CD14-positive monocyte (primary cell): ENCODE measurements at regions of chr10 and their contacts with region 1.

Region 1: GRCh38 chr10:4333459-4333894 is 492.5 kb upstream of the AKR1E2 start:
- DNase-seq: peak; percentile 72 to 89 (median 73)
- H3K4me3 ChIP-seq: no peak overlapping the region
- H3K4me3 Mint-ChIP-seq: no peak overlapping the region
- H3K27ac ChIP-seq: peak overlapping the region; percentile 30 to 72
- H3K27ac Mint-ChIP-seq: no peak overlapping the region
- H3K4me1 ChIP-seq: no peaks in the 10 kb centered on the region
- H3K4me1 Mint-ChIP-seq: no peaks in the 10 kb centered on the region
- H3K27me3 ChIP-seq: no peaks in the 10 kb centered on the region
- H3K27me3 Mint-ChIP-seq: no peaks in the 10 kb centered on the region
- CTCF ChIP-seq: no peak

Region 2: GRCh38 chr10:3312403-3312802 is 1021.1 kb before region 1 on chr10:
- intact Hi-C with region 1: loop called (anchors 5 kb)
- DNase-seq: no peak
- H3K4me3 ChIP-seq: no peak overlapping the region
- H3K4me3 Mint-ChIP-seq: no peak overlapping the region
- H3K27ac ChIP-seq: no peak overlapping the region
- H3K27ac Mint-ChIP-seq: no peak overlapping the region
- H3K4me1 ChIP-seq: no peaks in the 10 kb centered on the region
- H3K4me1 Mint-ChIP-seq: no peaks in the 10 kb centered on the region
- H3K27me3 ChIP-seq: no peaks in the 10 kb centered on the region
- H3K27me3 Mint-ChIP-seq: peaks cover 4 to 12% (median 10%) of the 10 kb centered on the region in 3 donors
- CTCF ChIP-seq: no peak

Region 3: GRCh38 chr10:3765146-3765545 is 568.3 kb before region 1 on chr10:
- intact Hi-C with region 1: loop called in 1 of 2 experiments (anchors 5 kb)
- DNase-seq: peak in 2 of 3 donors; percentile 69 to 70
- H3K4me3 ChIP-seq: peak overlapping the region in 1 of 3 experiments; percentile 57
- H3K4me3 Mint-ChIP-seq: peak overlapping the region in 1 of 2 donors; percentile 74
- H3K27ac ChIP-seq: peak overlapping the region; percentile 36 to 79
- H3K27ac Mint-ChIP-seq: peak overlapping the region; percentile 83 to 93 (median 91)
- H3K4me1 ChIP-seq: peaks cover 97 to 100% of the 10 kb centered on the region in 2 donors
- H3K4me1 Mint-ChIP-seq: peaks cover 91% of the 10 kb centered on the region
- H3K27me3 ChIP-seq: no peaks in the 10 kb centered on the region
- H3K27me3 Mint-ChIP-seq: peaks cover 0 to 1% (median 0%) of the 10 kb centered on the region in 3 donors
- CTCF ChIP-seq: no peak

Region 4: GRCh38 chr10:4067531-4067930 is 265.9 kb before region 1 on chr10:
- intact Hi-C with region 1: loop called in 1 of 2 experiments (anchors 10 kb)
- DNase-seq: peak; percentile 43 to 84 (median 53)
- H3K4me3 ChIP-seq: peak overlapping the region in 1 of 3 experiments; percentile 35
- H3K4me3 Mint-ChIP-seq: no peak overlapping the region
- H3K27ac ChIP-seq: peak overlapping the region; percentile 52 to 85
- H3K27ac Mint-ChIP-seq: no peak overlapping the region
- H3K4me1 ChIP-seq: peaks cover 25 to 26% of the 10 kb centered on the region in 2 donors
- H3K4me1 Mint-ChIP-seq: no peaks in the 10 kb centered on the region
- H3K27me3 ChIP-seq: no peaks in the 10 kb centered on the region
- H3K27me3 Mint-ChIP-seq: peaks cover 0 to 2% (median 0%) of the 10 kb centered on the region in 3 donors
- CTCF ChIP-seq: no peak

Region 5: GRCh38 chr10:4131407-4132228 is 201.9 kb before region 1 on chr10:
- intact Hi-C with region 1: loop called (anchors 10 kb)
- DNase-seq: peak; percentile 83 to 96 (median 93)
- H3K4me3 ChIP-seq: peak overlapping the region; percentile 6 to 63 (median 25)
- H3K4me3 Mint-ChIP-seq: no peak overlapping the region
- H3K27ac ChIP-seq: peak overlapping the region; percentile 64 to 93
- H3K27ac Mint-ChIP-seq: no peak overlapping the region
- H3K4me1 ChIP-seq: peaks cover 65 to 71% of the 10 kb centered on the region in 2 donors
- H3K4me1 Mint-ChIP-seq: peaks cover 18% of the 10 kb centered on the region
- H3K27me3 ChIP-seq: no peaks in the 10 kb centered on the region
- H3K27me3 Mint-ChIP-seq: peaks cover 0 to 2% (median 0%) of the 10 kb centered on the region in 3 donors
- CTCF ChIP-seq: no peak